Breast epithelium (tissue), 4 donors: ENCODE measurements at regions of chrX and their contacts with region 1.

Region 1: DNA sequence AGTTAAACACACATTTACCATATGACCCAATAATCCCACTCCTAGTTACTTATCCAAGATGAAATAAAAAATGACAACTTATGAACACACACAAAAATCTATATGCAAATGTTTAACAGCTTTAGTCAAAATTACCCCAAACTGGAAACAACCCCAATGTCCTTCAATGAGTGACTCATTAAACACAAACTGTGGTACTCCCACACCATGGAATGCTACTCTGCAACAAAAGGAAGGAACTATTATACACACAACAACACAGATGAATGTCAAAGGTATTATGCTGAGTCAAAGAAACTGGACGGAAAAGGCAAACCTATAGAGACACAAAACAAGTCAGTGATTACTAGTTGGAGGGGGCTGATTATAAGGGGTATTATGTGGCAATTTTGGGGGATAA is 40.5 kb downstream of the MED14 start:
- DNase-seq: no peak
- H3K4me3 ChIP-seq: no peak overlapping the region
- H3K27ac ChIP-seq: no peak overlapping the region
- H3K4me1 ChIP-seq: no peaks in the 10 kb centered on the region
- H3K27me3 ChIP-seq: peaks cover 0 to 12% of the 10 kb centered on the region in 2 donors
- CTCF ChIP-seq: no peak
- POLR2A ChIP-seq: no peak

Region 2: GRCh38 chrX:39356119-39356807 is 1338.5 kb before region 1 on chrX:
- intact Hi-C with region 1: loop called (anchors 10 kb)
- DNase-seq: no peak
- H3K4me3 ChIP-seq: no peak overlapping the region
- H3K27ac ChIP-seq: no peak overlapping the region
- H3K4me1 ChIP-seq: no peaks in the 10 kb centered on the region
- H3K27me3 ChIP-seq: peaks cover 0 to 42% of the 10 kb centered on the region in 2 donors
- CTCF ChIP-seq: no peak
- POLR2A ChIP-seq: no peak